ENCODE measurements at regions of chr5 and their contacts with region 1.

Region 1: GRCh38 chr5:55021410-55021809 is 2.6 kb upstream of the GZMK start:
- DNase-seq: no peak
- H3K4me3 ChIP-seq: no peak overlapping the region
- H3K27ac ChIP-seq: no peak overlapping the region
- H3K4me1 ChIP-seq: peaks cover 0 to 9% (median 1%) of the 10 kb centered on the region in 4 donors
- H3K27me3 ChIP-seq: no peaks in the 10 kb centered on the region
- CTCF ChIP-seq: no peak

Region 2: DNA sequence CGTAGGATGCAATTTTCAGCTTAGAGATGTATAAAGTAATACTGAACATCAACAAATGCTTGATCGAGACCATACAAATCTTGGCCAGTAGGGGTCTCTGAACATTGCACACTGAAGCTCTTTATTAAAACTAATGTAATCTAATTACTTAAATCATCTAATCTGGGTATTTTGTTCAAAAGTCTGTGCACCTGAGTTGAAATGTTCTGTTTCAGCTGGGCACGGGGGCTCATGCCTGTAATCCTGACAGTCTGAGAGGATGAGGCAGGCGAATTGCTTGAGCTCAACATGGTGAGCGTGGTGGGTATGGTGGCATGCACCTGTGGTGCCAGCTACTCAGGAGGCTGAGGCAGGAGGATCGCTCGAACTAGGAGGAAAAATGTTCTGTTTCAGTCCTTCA is 77.0 kb before region 1 on chr5:
- intact Hi-C with region 1: no loop called
- DNase-seq: peak in 1 of 2 donors; percentile 22
- H3K4me3 ChIP-seq: no peak overlapping the region
- H3K27ac ChIP-seq: no peak overlapping the region
- H3K4me1 ChIP-seq: no peaks in the 10 kb centered on the region
- H3K27me3 ChIP-seq: no peaks in the 10 kb centered on the region
- CTCF ChIP-seq: peak; percentile 57 to 59

Region 3: GRCh38 chr5:54988817-54989216 is 32.6 kb before region 1 on chr5:
- intact Hi-C with region 1: loop called (anchors 2 kb)
- DNase-seq: no peak
- H3K4me3 ChIP-seq: no peak overlapping the region
- H3K27ac ChIP-seq: no peak overlapping the region
- H3K4me1 ChIP-seq: peaks cover 0 to 9% (median 7%) of the 10 kb centered on the region in 4 donors
- H3K27me3 ChIP-seq: peaks cover 0 to 9% of the 10 kb centered on the region in 2 donors
- CTCF ChIP-seq: no peak

Measured in tibial artery (tissue), 4 donors.